ENCODE measurements at regions of chr10 and their contacts with region 1.

Region 1: GRCh38 chr10:34732926-34733325 is 82.2 kb downstream of the PARD3 start:
- DNase-seq: peak; percentile 93
- ATAC-seq: peak; percentile 25
- H3K4me3 ChIP-seq: peak overlapping the region; percentile 0; the same call in 1 of the 2 replicates
- H3K27ac ChIP-seq: peak overlapping the region; percentile 71
- H3K4me1 ChIP-seq: peaks cover 43% of the 10 kb centered on the region
- H3K27me3 ChIP-seq: no peaks in the 10 kb centered on the region
- CTCF ChIP-seq: peak; percentile 86

Region 2: GRCh38 chr10:34507217-34507616 is 225.7 kb before region 1 on chr10:
- CTCF ChIA-PET with region 1: no interaction called
- POLR2A ChIA-PET with region 1: no interaction called
- intact Hi-C with region 1: no loop called
- DNase-seq: no peak
- ATAC-seq: no peak
- H3K4me3 ChIP-seq: no peak overlapping the region
- H3K27ac ChIP-seq: no peak overlapping the region
- H3K4me1 ChIP-seq: peaks cover 14% of the 10 kb centered on the region
- H3K27me3 ChIP-seq: no peaks in the 10 kb centered on the region
- CTCF ChIP-seq: no peak

Region 3: DNA sequence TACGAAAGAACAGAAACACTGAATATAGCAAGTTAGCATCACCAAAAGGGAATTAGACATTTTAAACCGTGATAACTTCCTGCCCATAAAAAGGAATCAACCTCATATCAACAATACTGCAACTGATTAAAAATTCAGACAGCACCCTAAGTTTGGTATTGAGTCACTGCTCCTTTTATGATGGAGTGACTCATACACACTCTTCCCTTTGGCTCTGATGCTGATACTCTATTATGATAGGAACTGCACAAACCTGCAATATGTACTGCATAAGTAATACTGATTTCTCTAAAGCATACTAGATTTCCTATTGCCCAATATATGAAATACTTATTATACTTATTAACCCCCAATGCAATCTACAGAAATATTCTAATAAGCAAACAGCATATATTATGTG is 36.5 kb before region 1 on chr10:
- CTCF ChIA-PET with region 1: no interaction called
- POLR2A ChIA-PET with region 1: no interaction called
- intact Hi-C with region 1: loop called (anchors 1 kb)
- DNase-seq: peak; percentile 99
- ATAC-seq: peak; percentile 74
- H3K4me3 ChIP-seq: no peak overlapping the region
- H3K27ac ChIP-seq: peak overlapping the region; percentile 0; the same call in 1 of the 2 replicates
- H3K4me1 ChIP-seq: peaks cover 57% of the 10 kb centered on the region
- H3K27me3 ChIP-seq: no peaks in the 10 kb centered on the region
- CTCF ChIP-seq: no peak

Region 4: DNA sequence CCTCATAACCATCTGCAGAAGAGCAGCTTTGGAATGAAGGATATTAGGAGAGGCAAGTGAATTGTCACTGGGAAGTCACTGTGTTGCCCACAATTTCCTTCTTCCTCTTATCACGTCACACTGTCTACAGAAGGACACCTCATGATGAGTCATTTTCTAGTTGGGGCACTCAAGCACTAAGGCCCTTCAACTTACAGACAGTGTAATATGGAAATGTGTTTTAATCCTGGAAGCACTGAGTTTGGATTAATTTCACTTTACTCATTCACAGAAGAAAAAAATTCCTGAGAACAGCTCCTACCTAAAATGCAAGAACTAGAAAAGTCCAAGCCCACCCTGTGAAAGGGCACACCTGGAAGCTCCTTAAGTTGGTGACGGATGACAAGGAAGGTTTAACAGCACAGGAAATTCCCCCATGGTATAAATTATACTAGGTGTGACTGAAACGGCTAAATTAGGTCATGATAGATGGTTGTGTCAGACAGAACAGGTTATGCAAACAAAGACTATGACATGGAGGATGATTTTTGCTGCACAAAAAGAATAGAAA is 25.6 kb after region 1 on chr10:
- CTCF ChIA-PET with region 1: interaction called, 3 read pairs
- POLR2A ChIA-PET with region 1: interaction called, 5 read pairs
- intact Hi-C with region 1: loop called (anchors 1 kb)
- DNase-seq: peak; percentile 100
- ATAC-seq: peak; percentile 91
- H3K4me3 ChIP-seq: peak overlapping the region; percentile 35
- H3K27ac ChIP-seq: peak overlapping the region; percentile 81
- H3K4me1 ChIP-seq: peaks cover 52% of the 10 kb centered on the region
- H3K27me3 ChIP-seq: no peaks in the 10 kb centered on the region
- CTCF ChIP-seq: no peak

Region 5: GRCh38 chr10:34845070-34845469 is 112.1 kb after region 1 on chr10:
- CTCF ChIA-PET with region 1: no interaction called
- POLR2A ChIA-PET with region 1: interaction called, 11 read pairs
- intact Hi-C with region 1: no loop called
- DNase-seq: no peak
- ATAC-seq: peak; percentile 52
- H3K4me3 ChIP-seq: no peak overlapping the region
- H3K27ac ChIP-seq: no peak overlapping the region
- H3K4me1 ChIP-seq: no peaks in the 10 kb centered on the region
- H3K27me3 ChIP-seq: no peaks in the 10 kb centered on the region
- CTCF ChIP-seq: no peak